AG04450 (cell line): ENCODE measurements at regions of chr16 and their contacts with region 1.

Region 1: DNA sequence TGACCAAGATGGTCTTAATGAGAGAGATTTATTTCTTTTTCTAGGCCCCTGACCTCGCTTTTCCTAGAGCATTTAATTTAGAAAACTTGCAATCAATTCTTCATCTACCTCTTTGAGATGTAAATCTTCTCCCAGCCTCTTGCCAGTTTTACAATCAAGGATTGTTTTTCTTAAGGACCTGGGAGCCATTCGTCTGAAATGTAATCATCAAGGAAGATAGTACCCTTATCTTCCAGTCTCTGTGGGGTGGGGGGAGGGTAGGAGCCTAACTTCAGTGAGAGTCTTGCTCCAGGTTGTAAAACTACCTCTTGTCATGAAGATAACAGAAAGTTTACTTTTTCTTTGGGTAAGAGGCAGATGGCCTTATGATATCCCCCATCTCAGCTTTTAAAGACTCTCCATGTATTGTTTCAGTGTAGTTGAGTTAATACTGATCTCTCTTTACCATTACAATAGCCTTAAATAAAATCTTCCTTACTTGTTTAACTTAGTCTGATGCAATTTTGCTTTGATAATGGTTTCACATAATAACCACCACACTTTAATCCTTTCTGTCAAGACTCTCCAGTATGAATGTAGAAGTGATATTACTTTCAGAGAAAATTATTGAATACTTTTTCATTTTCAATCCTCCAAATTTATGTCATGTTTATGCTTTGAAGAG is 110.2 kb upstream of the CPHXL start:
- DNase-seq: no peak
- H3K4me3 ChIP-seq: no peak overlapping the region
- H3K27ac ChIP-seq: no peak overlapping the region
- H3K27me3 ChIP-seq: no peaks in the 10 kb centered on the region
- CTCF ChIP-seq: no peak

Region 2: DNA sequence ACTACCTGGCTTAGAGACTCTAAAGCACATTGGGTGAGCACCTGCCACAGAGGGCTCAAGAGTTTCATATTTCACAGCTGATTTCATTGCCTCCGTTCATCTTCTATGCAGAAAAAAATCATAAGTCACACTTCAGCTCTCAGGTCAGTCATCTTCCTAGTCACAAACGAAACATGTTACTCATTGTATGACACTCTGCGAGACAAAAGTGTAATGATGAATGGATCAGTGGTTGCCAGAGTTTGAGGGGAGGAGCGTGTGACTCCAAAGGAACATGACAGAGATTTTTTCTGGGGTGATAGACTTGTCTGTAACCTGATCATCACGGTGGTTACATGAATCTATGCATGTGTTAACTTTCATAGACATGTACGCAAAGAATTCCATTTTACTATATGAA is 245.5 kb after region 1 on chr16:
- CTCF ChIA-PET with region 1: no interaction called
- POLR2A ChIA-PET with region 1: no interaction called
- DNase-seq: no peak
- H3K4me3 ChIP-seq: no peak overlapping the region
- H3K27ac ChIP-seq: no peak overlapping the region
- H3K27me3 ChIP-seq: no peaks in the 10 kb centered on the region
- CTCF ChIP-seq: no peak

Region 3: DNA sequence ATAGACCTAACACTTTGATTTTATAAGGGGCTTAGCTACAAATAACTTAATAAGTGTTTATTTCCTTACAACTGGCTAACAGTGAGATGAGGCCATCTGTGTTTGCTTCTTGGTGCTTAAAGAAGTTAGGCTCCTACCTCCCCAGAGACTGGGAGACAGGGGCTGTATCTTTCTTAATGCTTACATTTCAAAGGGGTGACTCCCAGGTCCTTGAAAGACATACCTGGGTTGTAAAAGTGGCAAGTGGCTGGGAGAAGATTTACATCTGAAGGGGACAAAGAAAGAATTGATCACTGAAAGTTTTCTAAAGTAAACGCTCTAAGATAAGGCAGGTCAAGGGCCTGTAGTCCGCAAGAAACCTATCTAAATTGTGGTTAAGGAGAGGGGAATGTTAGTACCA is 637.6 kb after region 1 on chr16:
- CTCF ChIA-PET with region 1: interaction called, 11 read pairs
- POLR2A ChIA-PET with region 1: no interaction called
- DNase-seq: no peak
- H3K4me3 ChIP-seq: no peak overlapping the region
- H3K27ac ChIP-seq: no peak overlapping the region
- H3K27me3 ChIP-seq: no peaks in the 10 kb centered on the region
- CTCF ChIP-seq: no peak